ENCODE measurements at regions of chr12 and their contacts with region 1.

Region 1: GRCh38 chr12:52980693-52981423 is 25.4 kb upstream of the EIF4B start:
- DNase-seq: peak; percentile 54 to 90 (median 75)
- ATAC-seq: peak; percentile 94 to 97 (median 95)
- H3K4me3 ChIP-seq: no peak overlapping the region
- H3K4me3 Mint-ChIP-seq: no peak overlapping the region
- H3K27ac ChIP-seq: no peak overlapping the region
- H3K27ac Mint-ChIP-seq: peak overlapping the region in 1 of 2 donors; percentile 12
- H3K4me1 ChIP-seq: peaks cover 0 to 7% of the 10 kb centered on the region in 2 experiments
- H3K4me1 Mint-ChIP-seq: peaks cover 0 to 2% (median 0%) of the 10 kb centered on the region in 3 donors
- H3K27me3 ChIP-seq: peaks cover 0 to 37% of the 10 kb centered on the region in 2 experiments
- H3K27me3 Mint-ChIP-seq: peaks cover 32 to 48% of the 10 kb centered on the region in 2 donors

Region 2: GRCh38 chr12:52879394-52880351 is 101.2 kb before region 1 on chr12:
- CTCF ChIA-PET with region 1: interaction called, 62 to 78 read pairs
- POLR2A ChIA-PET with region 1: no interaction called
- DNase-seq: peak; percentile 32 to 83 (median 71)
- ATAC-seq: peak; percentile 91 to 98 (median 94)
- H3K4me3 ChIP-seq: peak overlapping the region in 1 of 2 donors; percentile 30
- H3K4me3 Mint-ChIP-seq: peak overlapping the region; percentile 56 to 69 (median 68)
- H3K27ac ChIP-seq: no peak overlapping the region
- H3K27ac Mint-ChIP-seq: no peak overlapping the region
- H3K4me1 ChIP-seq: peaks cover 0 to 19% of the 10 kb centered on the region in 2 experiments
- H3K4me1 Mint-ChIP-seq: peaks cover 9 to 15% (median 15%) of the 10 kb centered on the region in 3 donors
- H3K27me3 ChIP-seq: peaks cover 0 to 51% of the 10 kb centered on the region in 2 experiments
- H3K27me3 Mint-ChIP-seq: peaks cover 7 to 11% of the 10 kb centered on the region in 2 donors

Region 3: DNA sequence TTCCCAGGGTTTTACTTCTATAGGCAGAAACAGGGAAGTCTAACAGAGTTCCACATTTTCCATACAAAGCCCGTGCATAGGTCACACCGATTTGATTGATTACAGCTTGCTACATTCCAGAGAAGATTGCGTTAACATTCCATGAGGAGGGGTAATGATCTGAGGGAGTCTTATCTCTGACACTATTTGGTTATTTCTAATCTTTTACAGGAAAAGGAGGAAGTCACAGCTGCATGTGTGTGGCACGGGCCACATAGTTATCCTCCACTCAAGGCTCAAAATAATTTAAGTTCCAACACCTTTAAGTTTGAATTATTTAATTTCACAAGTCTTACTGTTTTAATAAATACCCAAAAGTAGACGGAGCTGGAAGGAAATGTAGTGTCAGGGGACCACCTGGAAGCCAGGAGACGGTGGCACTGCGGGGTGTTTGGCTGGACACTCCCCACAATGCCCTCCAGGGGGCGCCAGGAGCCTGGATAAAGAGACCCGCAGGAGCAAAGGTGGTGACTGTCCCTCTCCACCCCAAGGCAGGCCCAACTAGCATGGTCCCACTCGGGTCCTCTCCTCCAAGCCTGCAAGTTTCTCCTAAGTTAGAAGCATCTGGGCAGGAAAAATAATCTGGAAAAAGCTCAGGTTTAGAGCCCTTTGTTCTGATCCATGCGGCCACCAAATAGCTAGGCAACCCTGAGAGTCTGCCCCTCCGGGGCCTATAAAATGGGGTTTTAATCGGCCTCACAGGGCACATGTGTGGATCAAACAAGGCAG is 96.1 kb before region 1 on chr12:
- CTCF ChIA-PET with region 1: interaction called, 62 to 78 read pairs
- POLR2A ChIA-PET with region 1: interaction called in 1 of 2 experiments, 14 read pairs
- DNase-seq: peak; percentile 49 to 83 (median 74)
- ATAC-seq: peak; percentile 73 to 83 (median 80)
- H3K4me3 ChIP-seq: no peak overlapping the region
- H3K4me3 Mint-ChIP-seq: no peak overlapping the region
- H3K27ac ChIP-seq: no peak overlapping the region
- H3K27ac Mint-ChIP-seq: no peak overlapping the region
- H3K4me1 ChIP-seq: peaks cover 0 to 6% of the 10 kb centered on the region in 2 experiments
- H3K4me1 Mint-ChIP-seq: peaks cover 7 to 10% (median 7%) of the 10 kb centered on the region in 3 donors
- H3K27me3 ChIP-seq: peaks cover 0 to 43% of the 10 kb centered on the region in 2 experiments
- H3K27me3 Mint-ChIP-seq: peaks cover 10 to 16% of the 10 kb centered on the region in 2 donors

Region 4: GRCh38 chr12:52920937-52921826 is 59.7 kb before region 1 on chr12:
- CTCF ChIA-PET with region 1: no interaction called
- POLR2A ChIA-PET with region 1: no interaction called
- DNase-seq: no peak
- ATAC-seq: no peak
- H3K4me3 ChIP-seq: no peak overlapping the region
- H3K4me3 Mint-ChIP-seq: no peak overlapping the region
- H3K27ac ChIP-seq: no peak overlapping the region
- H3K27ac Mint-ChIP-seq: no peak overlapping the region
- H3K4me1 ChIP-seq: no peaks in the 10 kb centered on the region
- H3K4me1 Mint-ChIP-seq: no peaks in the 10 kb centered on the region
- H3K27me3 ChIP-seq: peaks cover 0 to 15% of the 10 kb centered on the region in 2 experiments
- H3K27me3 Mint-ChIP-seq: peaks cover 2 to 3% of the 10 kb centered on the region in 2 donors

Region 5: GRCh38 chr12:53014709-53015108 is 33.9 kb after region 1 on chr12:
- CTCF ChIA-PET with region 1: no interaction called
- POLR2A ChIA-PET with region 1: no interaction called
- DNase-seq: no peak
- ATAC-seq: no peak
- H3K4me3 ChIP-seq: no peak overlapping the region
- H3K4me3 Mint-ChIP-seq: no peak overlapping the region
- H3K27ac ChIP-seq: no peak overlapping the region
- H3K27ac Mint-ChIP-seq: peak overlapping the region in 1 of 2 donors; percentile 28
- H3K4me1 ChIP-seq: peaks cover 6 to 24% of the 10 kb centered on the region in 2 experiments
- H3K4me1 Mint-ChIP-seq: peaks cover 43 to 52% (median 50%) of the 10 kb centered on the region in 3 donors
- H3K27me3 ChIP-seq: no peaks in the 10 kb centered on the region
- H3K27me3 Mint-ChIP-seq: no peaks in the 10 kb centered on the region

Measured in T-cell (primary cell).